Activated CD4-positive, alpha-beta T cell treated with anti-CD3 and anti-CD28 coated beads, Interleukin-2, amount 10 ng/mL, durations not matched to agents 24 days and 14 days (primary cell): ENCODE measurements at regions of chr18 and their contacts with region 1.

Region 1: GRCh38 chr18:23563377-23564043 is 22.8 kb downstream of the NPC1 start:
- DNase-seq: no peak
- H3K4me3 Mint-ChIP-seq: no peak overlapping the region
- H3K27ac Mint-ChIP-seq: peak overlapping the region; percentile 55
- H3K4me1 Mint-ChIP-seq: peaks cover 10% of the 10 kb centered on the region
- H3K27me3 Mint-ChIP-seq: no peaks in the 10 kb centered on the region

Region 2: DNA sequence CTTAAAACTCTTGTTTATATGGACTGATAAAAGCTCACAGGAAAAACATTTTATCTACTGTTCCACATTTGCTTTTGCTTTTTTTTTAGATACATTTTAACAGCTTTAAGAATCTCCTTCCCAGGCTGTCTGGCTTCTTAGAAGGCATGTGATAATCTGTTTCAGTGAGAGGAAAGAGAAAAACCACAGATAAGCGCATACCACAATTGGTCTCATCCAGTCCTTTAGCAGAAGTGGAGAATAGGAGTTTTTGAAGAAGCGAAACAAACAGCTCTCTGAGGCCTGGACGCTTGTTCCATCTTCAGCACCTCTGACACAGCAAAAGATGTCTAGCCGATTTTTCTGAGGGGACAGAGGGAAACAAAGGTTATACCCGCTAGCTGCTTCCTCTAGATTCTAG is 22.6 kb before region 1 on chr18:
- intact Hi-C with region 1: loop called (anchors 1 kb)
- DNase-seq: peak; percentile 83
- H3K4me3 Mint-ChIP-seq: peak overlapping the region; percentile 84
- H3K27ac Mint-ChIP-seq: peak overlapping the region; percentile 83
- H3K4me1 Mint-ChIP-seq: peaks cover 35% of the 10 kb centered on the region
- H3K27me3 Mint-ChIP-seq: no peaks in the 10 kb centered on the region